Aorta (tissue), 5 donors: ENCODE measurements at regions of chr2 and their contacts with region 1.

Region 1: GRCh38 chr2:55856936-55857335 is 66.6 kb downstream of the EFEMP1 start:
- DNase-seq: no peak
- ATAC-seq: no peak
- H3K4me3 ChIP-seq: no peak overlapping the region
- H3K27ac ChIP-seq: no peak overlapping the region
- H3K4me1 ChIP-seq: peaks cover 5 to 9% of the 10 kb centered on the region in 2 donors
- H3K27me3 ChIP-seq: no peaks in the 10 kb centered on the region

Region 2: GRCh38 chr2:55779459-55780421 is 77.2 kb before region 1 on chr2:
- intact Hi-C with region 1: loop called in 1 of 2 experiments (anchors 2 kb)
- DNase-seq: no peak
- ATAC-seq: no peak
- H3K4me3 ChIP-seq: no peak overlapping the region
- H3K27ac ChIP-seq: no peak overlapping the region
- H3K4me1 ChIP-seq: peaks cover 0 to 1% of the 10 kb centered on the region in 2 donors
- H3K27me3 ChIP-seq: no peaks in the 10 kb centered on the region

Region 3: GRCh38 chr2:55901325-55901724 is 44.4 kb after region 1 on chr2:
- intact Hi-C with region 1: no loop called
- DNase-seq: no peak
- ATAC-seq: peak; percentile 50
- H3K4me3 ChIP-seq: no peak overlapping the region
- H3K27ac ChIP-seq: peak overlapping the region in 1 of 2 donors; percentile 22
- H3K4me1 ChIP-seq: peaks cover 0 to 12% of the 10 kb centered on the region in 2 donors
- H3K27me3 ChIP-seq: no peaks in the 10 kb centered on the region

Region 4: DNA sequence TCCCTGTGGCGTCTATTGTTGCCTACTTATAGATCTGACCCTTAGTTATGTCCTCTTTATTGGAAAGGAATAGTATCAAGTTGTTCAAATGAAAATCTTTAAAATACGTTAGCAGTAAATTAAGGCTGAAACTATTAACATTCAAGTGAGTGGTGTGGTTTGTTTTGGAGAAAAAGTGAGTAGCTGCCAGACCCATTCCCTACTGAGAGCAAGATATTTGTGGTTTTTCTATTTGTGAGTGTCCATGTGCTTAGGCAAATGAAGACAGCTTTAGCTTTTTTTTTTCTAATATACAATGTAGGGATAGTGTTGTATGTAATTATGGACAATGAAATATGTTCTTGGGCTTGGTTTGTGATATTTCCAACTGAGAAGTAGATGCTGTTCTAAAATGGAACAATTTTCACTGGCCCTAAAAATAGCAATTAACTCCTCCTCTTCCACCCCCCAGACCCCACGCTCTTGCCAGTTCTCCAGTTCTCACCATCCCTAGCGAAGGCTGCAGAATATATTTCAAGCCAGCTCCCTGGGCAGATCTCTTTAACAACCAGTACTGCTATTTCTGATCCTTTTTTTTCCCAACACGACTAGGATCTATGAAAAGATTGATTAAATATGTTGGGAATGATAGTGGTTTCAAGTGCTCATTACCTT is 410.0 kb after region 1 on chr2:
- intact Hi-C with region 1: no loop called
- DNase-seq: no peak
- ATAC-seq: no peak
- H3K4me3 ChIP-seq: no peak overlapping the region
- H3K27ac ChIP-seq: no peak overlapping the region
- H3K4me1 ChIP-seq: no peaks in the 10 kb centered on the region
- H3K27me3 ChIP-seq: no peaks in the 10 kb centered on the region